ENCODE measurements at regions of chr20 and their contacts with region 1.

Region 1: GRCh38 chr20:51385646-51386530 is 156.6 kb downstream of the NFATC2 start:
- DNase-seq: peak; percentile 74
- ATAC-seq: no peak
- H3K4me3 ChIP-seq: no peak overlapping the region
- H3K27ac ChIP-seq: no peak overlapping the region; the same call in 1 of the 2 replicates
- H3K4me1 ChIP-seq: peaks cover 64% of the 10 kb centered on the region
- H3K27me3 ChIP-seq: no peaks in the 10 kb centered on the region
- CTCF ChIP-seq: peak; percentile 95

Region 2: GRCh38 chr20:51258582-51259180 is 127.2 kb before region 1 on chr20:
- CTCF ChIA-PET with region 1: no interaction called
- POLR2A ChIA-PET with region 1: no interaction called
- intact Hi-C with region 1: no loop called
- DNase-seq: peak; percentile 61
- ATAC-seq: peak; percentile 20; the same call in 1 of the 2 replicates
- H3K4me3 ChIP-seq: no peak overlapping the region
- H3K27ac ChIP-seq: no peak overlapping the region
- H3K4me1 ChIP-seq: peaks cover 5% of the 10 kb centered on the region; the same call in 1 of the 2 replicates
- H3K27me3 ChIP-seq: 0 out of 2 replicates have a peak, but pooled peaks cover 5% of the 10 kb centered on the region
- CTCF ChIP-seq: no peak

Region 3: DNA sequence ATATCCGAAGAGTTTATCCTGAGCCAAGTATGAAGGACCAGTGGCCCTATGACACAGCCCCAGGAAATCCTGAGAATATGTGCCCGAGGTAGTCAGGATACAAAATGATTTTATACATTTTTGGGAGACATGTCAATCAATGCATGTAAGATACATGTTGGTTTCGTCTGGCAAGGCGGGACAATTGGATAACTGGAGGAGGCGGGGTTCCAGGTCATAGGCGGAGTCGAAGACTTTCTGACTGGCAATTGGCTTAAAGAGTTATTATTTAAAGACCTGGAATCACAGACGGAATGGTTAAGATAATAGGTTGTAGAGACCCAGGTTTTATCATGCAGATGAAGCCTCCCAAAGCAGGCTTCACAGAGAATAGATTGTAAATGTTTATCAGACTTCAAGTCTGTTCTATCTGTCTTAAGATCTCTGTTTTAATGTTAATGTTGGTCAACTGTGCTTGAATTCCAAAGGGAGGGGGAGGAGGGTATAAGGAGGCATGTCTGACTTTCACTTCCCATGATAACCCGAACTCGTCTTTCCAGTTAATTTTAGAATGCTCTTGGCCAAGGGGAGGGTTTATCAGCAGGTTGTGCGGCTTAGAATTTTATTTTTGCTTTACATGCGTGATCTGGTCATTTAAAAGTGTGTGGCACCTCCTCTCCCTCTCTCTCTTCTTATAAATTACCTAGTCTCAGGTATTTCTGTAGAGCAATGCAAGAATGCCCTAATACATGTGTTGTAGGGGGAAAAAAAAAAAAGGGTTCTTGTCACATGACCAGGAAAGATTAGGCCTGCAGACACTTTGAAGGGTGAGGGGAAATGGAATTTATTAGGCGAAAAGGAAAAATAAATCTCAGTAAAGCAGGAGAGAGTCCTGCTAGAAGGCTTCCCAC is 74.0 kb before region 1 on chr20:
- CTCF ChIA-PET with region 1: no interaction called
- POLR2A ChIA-PET with region 1: no interaction called
- intact Hi-C with region 1: no loop called
- DNase-seq: peak; percentile 82
- ATAC-seq: no peak
- H3K4me3 ChIP-seq: no peak overlapping the region
- H3K27ac ChIP-seq: no peak overlapping the region
- H3K4me1 ChIP-seq: peaks cover 17% of the 10 kb centered on the region
- H3K27me3 ChIP-seq: no peaks in the 10 kb centered on the region
- CTCF ChIP-seq: no peak

Region 4: GRCh38 chr20:51326201-51326819 is 59.6 kb before region 1 on chr20:
- CTCF ChIA-PET with region 1: no interaction called
- POLR2A ChIA-PET with region 1: interaction called, 4 read pairs
- intact Hi-C with region 1: loop called (anchors 1 kb)
- DNase-seq: no peak
- ATAC-seq: no peak
- H3K4me3 ChIP-seq: no peak overlapping the region
- H3K27ac ChIP-seq: peak overlapping the region; percentile 88
- H3K4me1 ChIP-seq: peaks cover 17% of the 10 kb centered on the region
- H3K27me3 ChIP-seq: no peaks in the 10 kb centered on the region
- CTCF ChIP-seq: peak; percentile 77

Region 5: GRCh38 chr20:51447097-51447771 is 61.3 kb after region 1 on chr20:
- CTCF ChIA-PET with region 1: interaction called, 8 read pairs
- POLR2A ChIA-PET with region 1: no interaction called
- intact Hi-C with region 1: loop called (anchors 1 kb)
- DNase-seq: peak; percentile 100
- ATAC-seq: peak; percentile 86
- H3K4me3 ChIP-seq: peak overlapping the region; percentile 51
- H3K27ac ChIP-seq: peak overlapping the region; percentile 80
- H3K4me1 ChIP-seq: peaks cover 30% of the 10 kb centered on the region
- H3K27me3 ChIP-seq: no peaks in the 10 kb centered on the region
- CTCF ChIP-seq: no peak

Region 6: DNA sequence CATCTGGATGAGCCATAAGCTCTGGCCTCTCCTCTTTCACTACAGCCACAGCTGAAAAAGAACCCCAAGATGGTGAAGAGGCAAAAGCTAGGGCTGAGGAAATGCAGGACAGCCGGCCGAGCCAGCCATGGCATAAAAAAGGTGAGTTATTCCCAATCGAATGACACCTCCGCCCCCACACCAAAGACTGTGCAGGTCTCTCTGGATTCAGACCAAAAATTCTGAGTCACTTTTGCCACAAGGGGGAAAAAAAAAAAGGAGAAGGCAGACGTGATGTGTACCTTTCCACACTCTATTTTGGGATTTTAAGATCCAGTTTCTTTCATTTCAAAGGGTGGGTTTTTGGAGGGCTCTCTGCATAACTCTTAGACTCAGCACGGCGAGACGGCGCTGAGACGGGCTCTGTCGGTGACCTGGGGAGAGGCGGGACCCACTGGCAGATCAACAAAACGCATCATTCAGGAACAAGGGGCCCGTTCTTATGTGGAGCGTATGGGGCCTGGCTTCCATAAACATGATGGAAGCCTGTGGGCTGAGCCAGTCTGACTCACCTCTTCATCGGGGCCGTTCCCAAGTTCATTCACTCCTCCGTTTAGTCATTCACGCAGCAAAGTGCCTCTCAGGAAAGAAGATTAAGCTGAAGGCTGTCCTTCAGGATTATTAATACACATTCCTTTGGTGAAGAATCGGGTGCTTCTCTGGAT is 101.8 kb after region 1 on chr20:
- CTCF ChIA-PET with region 1: no interaction called
- POLR2A ChIA-PET with region 1: no interaction called
- intact Hi-C with region 1: loop called (anchors 5 kb)
- DNase-seq: peak; percentile 99
- ATAC-seq: peak; percentile 99
- H3K4me3 ChIP-seq: peak overlapping the region; percentile 63
- H3K27ac ChIP-seq: peak overlapping the region; percentile 92
- H3K4me1 ChIP-seq: peaks cover 25% of the 10 kb centered on the region
- H3K27me3 ChIP-seq: no peaks in the 10 kb centered on the region
- CTCF ChIP-seq: no peak

Region 7: DNA sequence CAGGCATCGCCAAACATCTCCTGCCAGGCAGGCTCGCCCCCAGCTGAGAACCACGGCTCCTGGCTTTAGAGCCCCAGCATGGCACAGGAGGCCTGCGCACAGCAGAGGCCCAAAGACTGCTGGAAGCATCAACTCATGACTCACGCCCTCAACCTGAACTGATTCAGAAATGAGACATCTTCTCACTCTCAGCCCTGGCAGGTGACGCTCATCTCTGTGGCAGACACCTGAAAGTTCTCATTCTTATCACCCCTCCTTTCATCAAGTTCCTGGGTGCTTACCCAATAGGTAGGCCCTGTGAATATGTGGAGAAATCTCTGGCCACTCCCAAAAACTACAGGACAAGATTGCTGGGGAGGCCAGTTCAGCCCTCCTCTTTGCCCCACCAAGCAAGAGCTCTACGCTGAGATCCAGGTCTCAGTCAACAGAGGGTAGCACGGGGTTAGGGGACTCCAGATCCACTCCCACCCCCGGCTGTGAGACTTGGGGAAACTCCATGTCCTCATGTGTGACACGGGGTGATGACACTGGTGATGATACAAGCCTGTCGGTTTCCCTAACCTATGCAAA is 145.3 kb after region 1 on chr20:
- CTCF ChIA-PET with region 1: no interaction called
- POLR2A ChIA-PET with region 1: no interaction called
- intact Hi-C with region 1: no loop called
- DNase-seq: peak; percentile 98
- ATAC-seq: peak; percentile 71
- H3K4me3 ChIP-seq: no peak overlapping the region
- H3K27ac ChIP-seq: peak overlapping the region; percentile 78
- H3K4me1 ChIP-seq: peaks cover 37% of the 10 kb centered on the region
- H3K27me3 ChIP-seq: no peaks in the 10 kb centered on the region
- CTCF ChIP-seq: no peak

Region 8: DNA sequence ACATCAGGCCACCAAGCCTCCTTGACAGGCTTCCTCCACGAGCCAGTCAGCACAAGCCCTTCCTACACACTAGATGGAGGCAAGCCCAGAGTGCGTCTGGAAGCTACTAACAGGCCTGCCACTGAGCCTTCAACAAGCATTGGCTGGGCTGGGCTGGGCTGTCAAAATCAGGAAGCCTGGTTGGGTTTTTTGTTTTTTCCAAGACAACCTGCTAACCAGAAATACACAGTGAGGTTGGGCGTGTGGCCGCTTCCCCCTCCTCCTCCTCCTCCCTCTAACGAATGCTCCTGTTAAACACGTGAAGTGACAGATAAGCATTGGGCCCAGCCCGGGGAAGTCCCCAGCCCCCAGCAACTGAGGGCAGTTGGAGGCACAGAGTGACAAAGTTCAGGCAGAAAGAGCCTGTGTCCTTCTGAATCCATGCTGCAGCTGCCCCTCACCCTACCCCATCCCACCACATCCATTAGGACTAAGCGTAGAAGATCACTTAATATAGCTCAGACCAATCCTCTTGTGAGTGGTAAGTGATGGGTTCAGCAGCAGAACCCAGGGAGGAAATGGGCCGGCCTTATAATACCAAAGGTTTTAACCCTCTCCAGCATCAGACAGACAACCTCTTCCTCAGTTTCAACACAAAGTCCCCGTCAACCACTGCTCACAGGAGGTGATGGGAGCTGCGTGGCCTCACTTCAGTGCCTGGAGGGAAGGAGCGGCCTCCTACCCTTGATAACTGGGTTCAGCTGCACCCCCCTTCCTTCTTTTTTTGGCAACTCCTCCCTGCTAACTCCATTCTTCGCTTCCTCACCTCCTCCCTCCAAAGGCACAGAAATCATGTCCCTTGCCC is 155.5 kb after region 1 on chr20:
- CTCF ChIA-PET with region 1: no interaction called
- POLR2A ChIA-PET with region 1: interaction called, 4 read pairs
- intact Hi-C with region 1: loop called (anchors 5 kb)
- DNase-seq: no peak
- ATAC-seq: peak; percentile 23; the same call in 1 of the 2 replicates
- H3K4me3 ChIP-seq: peak overlapping the region; percentile 69
- H3K27ac ChIP-seq: no peak overlapping the region
- H3K4me1 ChIP-seq: peaks cover 21% of the 10 kb centered on the region
- H3K27me3 ChIP-seq: no peaks in the 10 kb centered on the region
- CTCF ChIP-seq: no peak

Measured in PC-3 (cell line).